ENCODE measurements at regions of chr2 and their contacts with region 1.

Region 1: GRCh38 chr2:146879882-146880281 is 964.9 kb upstream of the ACVR2A start:
- DNase-seq: peak; percentile 15
- H3K4me3 ChIP-seq: no peak overlapping the region
- H3K27ac ChIP-seq: no peak overlapping the region
- H3K4me1 ChIP-seq: no peaks in the 10 kb centered on the region
- H3K27me3 ChIP-seq: no peaks in the 10 kb centered on the region
- CTCF ChIP-seq: no peak

Region 2: GRCh38 chr2:146898083-146898482 is 18.2 kb after region 1 on chr2:
- CTCF ChIA-PET with region 1: no interaction called
- POLR2A ChIA-PET with region 1: no interaction called
- intact Hi-C with region 1: loop called (anchors 1 kb)
- DNase-seq: no peak
- H3K4me3 ChIP-seq: no peak overlapping the region
- H3K27ac ChIP-seq: no peak overlapping the region
- H3K4me1 ChIP-seq: no peaks in the 10 kb centered on the region
- H3K27me3 ChIP-seq: no peaks in the 10 kb centered on the region
- CTCF ChIP-seq: no peak